GM12878 (cell line): ENCODE measurements at regions of chr17 and their contacts with region 1.

Region 1: GRCh38 chr17:51153210-51154072 is at the start of gene NME1:
- DNase-seq: peak; percentile 99
- ATAC-seq: peak; percentile 93
- H3K4me3 ChIP-seq: peak within 1 kb of the TSS; percentile 90
- H3K27ac ChIP-seq: peak within 1 kb of the TSS; percentile 84
- H3K4me1 ChIP-seq: peaks cover 7% of the 10 kb centered on the region
- H3K27me3 ChIP-seq: no peaks in the 10 kb centered on the region
- CTCF ChIP-seq: peak; percentile 84 to 98 (median 95)
- EP300 ChIP-seq: peak in 1 of 2 experiments; percentile 40; a peak in 1 of 4 replicates
- POLR2A ChIP-seq: peak; percentile 90
- RAD21 ChIP-seq: peak; percentile 97
- polyA plus RNA-seq, gene NME1: 1,138 to 1,362 TPM

Region 2: GRCh38 chr17:50865984-50866774 is 287.3 kb before region 1 on chr17 and contains the start of gene TOB1:
- CTCF ChIA-PET with region 1: no interaction called
- POLR2A ChIA-PET with region 1: interaction called, 8 read pairs
- RAD21 ChIA-PET with region 1: interaction called, 4 read pairs
- SMC1A ChIA-PET with region 1: no interaction called
- in situ Hi-C with region 1: loop called (anchors 5 kb)
- intact Hi-C with region 1: loop called (anchors 2 kb)
- DNase-seq: peak; percentile 84
- ATAC-seq: peak; percentile 88
- H3K4me3 ChIP-seq: peak within 1 kb of the TSS; percentile 92
- H3K27ac ChIP-seq: peak within 1 kb of the TSS; percentile 98
- H3K4me1 ChIP-seq: peaks cover under 1% of the 10 kb centered on the region; the same call in 1 of the 2 replicates
- H3K27me3 ChIP-seq: no peaks in the 10 kb centered on the region
- CTCF ChIP-seq: no peak
- EP300 ChIP-seq: no peak; a peak in 1 of 4 replicates
- POLR2A ChIP-seq: peak; percentile 99
- RAD21 ChIP-seq: no peak
- polyA plus RNA-seq, gene TOB1: 19.5 to 28.3 TPM

Region 3: GRCh38 chr17:51006601-51007000 is 146.8 kb before region 1 on chr17:
- CTCF ChIA-PET with region 1: interaction called, 103 read pairs
- POLR2A ChIA-PET with region 1: interaction called, 6 read pairs
- RAD21 ChIA-PET with region 1: interaction called, 35 read pairs
- SMC1A ChIA-PET with region 1: interaction called, 64 read pairs
- in situ Hi-C with region 1: loop called (anchors 5 kb)
- intact Hi-C with region 1: loop called (anchors 1 kb)
- DNase-seq: no peak
- ATAC-seq: no peak
- H3K4me3 ChIP-seq: no peak overlapping the region
- H3K27ac ChIP-seq: no peak overlapping the region
- H3K4me1 ChIP-seq: no peaks in the 10 kb centered on the region
- H3K27me3 ChIP-seq: no peaks in the 10 kb centered on the region
- CTCF ChIP-seq: no peak
- EP300 ChIP-seq: no peak
- POLR2A ChIP-seq: no peak
- RAD21 ChIP-seq: no peak

Region 4: GRCh38 chr17:51056813-51057510 is 96.5 kb before region 1 on chr17:
- CTCF ChIA-PET with region 1: interaction called, 31 read pairs
- POLR2A ChIA-PET with region 1: interaction called, 3 read pairs
- RAD21 ChIA-PET with region 1: interaction called, 17 read pairs
- SMC1A ChIA-PET with region 1: interaction called, 10 read pairs
- in situ Hi-C with region 1: no loop called
- intact Hi-C with region 1: loop called (anchors 2 kb)
- DNase-seq: no peak
- ATAC-seq: peak; percentile 86
- H3K4me3 ChIP-seq: no peak overlapping the region
- H3K27ac ChIP-seq: no peak overlapping the region
- H3K4me1 ChIP-seq: peaks cover 24% of the 10 kb centered on the region
- H3K27me3 ChIP-seq: no peaks in the 10 kb centered on the region
- CTCF ChIP-seq: peak; percentile 57 to 71 (median 71)
- EP300 ChIP-seq: no peak
- POLR2A ChIP-seq: no peak
- RAD21 ChIP-seq: peak; percentile 87

Region 5: DNA sequence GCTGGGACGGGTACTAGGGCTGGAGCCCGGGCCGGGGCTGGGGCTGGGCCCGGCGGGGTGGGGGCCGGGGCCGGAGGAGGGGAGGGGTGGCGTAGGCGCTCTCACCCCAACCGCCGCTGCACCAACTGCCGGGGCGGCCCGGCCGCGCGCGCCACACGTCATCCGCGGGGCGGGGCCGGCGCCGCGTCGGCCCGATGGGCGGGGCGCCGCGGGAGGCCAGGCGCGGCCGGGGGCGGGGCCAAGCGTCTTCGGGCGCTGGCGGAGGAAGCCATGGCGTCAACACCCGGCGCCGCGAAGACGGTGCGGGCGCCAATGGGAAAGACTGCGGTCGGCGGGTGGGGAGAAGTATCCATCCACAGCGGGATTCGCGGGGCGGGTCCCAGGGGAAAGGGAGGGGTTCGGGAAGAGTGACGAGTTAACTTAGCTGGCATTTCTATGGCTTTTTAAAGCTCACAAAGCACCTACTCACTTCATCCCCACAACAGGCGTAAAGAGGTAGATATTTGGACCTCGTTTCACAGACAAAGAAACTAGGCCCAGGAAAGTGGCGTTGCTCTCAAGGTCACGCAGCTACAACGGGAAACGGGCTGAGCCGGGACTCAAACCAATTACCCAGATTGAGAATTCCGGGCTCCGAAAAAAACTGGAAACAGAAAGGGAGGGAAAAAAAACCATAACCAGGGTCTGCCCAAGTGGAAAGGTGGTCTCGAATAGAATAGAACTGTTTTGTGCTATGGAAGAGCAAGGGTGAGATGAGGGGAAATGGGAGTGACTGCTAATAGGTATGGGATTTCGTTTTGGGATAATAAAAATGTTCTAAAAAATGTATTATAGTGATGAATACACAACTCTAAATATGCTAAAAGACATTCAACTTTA is 32.5 kb before region 1 on chr17 and contains the start of gene SPAG9:
- CTCF ChIA-PET with region 1: interaction called, 17 read pairs
- POLR2A ChIA-PET with region 1: interaction called, 15 read pairs
- RAD21 ChIA-PET with region 1: interaction called, 15 read pairs
- SMC1A ChIA-PET with region 1: interaction called, 16 read pairs
- in situ Hi-C with region 1: no loop called
- intact Hi-C with region 1: loop called (anchors 1 kb)
- DNase-seq: peak; percentile 60
- ATAC-seq: peak; percentile 78
- H3K4me3 ChIP-seq: peak within 1 kb of the TSS; percentile 85
- H3K27ac ChIP-seq: peak within 1 kb of the TSS; percentile 81
- H3K4me1 ChIP-seq: peaks cover 15% of the 10 kb centered on the region; the same call in 1 of the 2 replicates
- H3K27me3 ChIP-seq: no peaks in the 10 kb centered on the region
- CTCF ChIP-seq: no peak
- EP300 ChIP-seq: peak in 1 of 2 experiments; percentile 28; a peak in 1 of 4 replicates
- POLR2A ChIP-seq: peak; percentile 88
- RAD21 ChIP-seq: no peak
- polyA plus RNA-seq, gene SPAG9: 6.6 to 6.8 TPM